OCI-LY7 (cell line): ENCODE measurements at regions of chr17 and their contacts with region 1.

Region 1: DNA sequence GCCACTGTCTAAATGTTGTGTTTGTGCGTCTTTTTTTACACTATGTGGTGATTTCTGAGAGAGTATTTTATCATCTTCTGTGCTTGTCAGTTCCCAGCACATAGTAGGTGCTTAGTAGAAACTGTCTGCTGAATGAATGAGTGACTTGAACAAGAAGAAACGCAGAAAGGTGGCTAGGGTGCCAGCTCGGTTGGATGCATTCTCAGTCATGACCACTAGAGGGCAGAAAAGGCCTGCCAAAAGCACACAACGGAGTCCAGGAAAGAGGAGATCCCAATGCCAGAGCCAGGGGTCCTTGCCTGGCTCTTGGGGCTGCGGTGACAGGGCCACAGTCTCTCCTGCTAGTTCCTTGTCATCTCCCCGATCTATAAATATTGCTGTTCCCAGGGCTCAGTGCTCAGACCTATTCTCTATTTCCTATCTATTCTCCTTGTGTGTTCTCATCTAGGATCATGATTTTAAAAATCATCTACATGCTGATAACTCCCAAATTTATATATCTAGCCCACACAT is 57.3 kb upstream of the CCL1 start:
- DNase-seq: peak; percentile 76
- H3K4me3 ChIP-seq: no peak overlapping the region
- H3K27ac ChIP-seq: no peak overlapping the region
- H3K4me1 ChIP-seq: no peaks in the 10 kb centered on the region
- CTCF ChIP-seq: peak; percentile 99

Region 2: DNA sequence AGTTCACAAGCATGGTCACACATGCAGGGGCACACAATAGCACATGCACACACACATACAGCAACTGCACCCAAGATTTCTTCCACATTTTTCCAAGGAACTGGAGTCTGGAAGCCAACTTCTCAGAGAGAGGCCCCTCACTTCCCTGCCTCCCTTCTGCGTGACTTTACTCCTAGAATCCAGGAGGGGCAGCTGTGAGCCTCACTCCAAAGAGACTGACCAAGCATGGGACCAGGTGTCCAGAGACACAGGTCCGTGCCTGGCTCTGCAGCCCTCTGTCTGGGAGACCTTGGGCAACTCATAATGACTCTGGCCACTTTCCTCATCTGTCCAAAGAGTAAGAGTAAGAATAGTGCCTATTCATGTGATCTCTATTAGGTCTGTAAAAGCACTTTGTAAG is 54.4 kb after region 1 on chr17:
- CTCF ChIA-PET with region 1: no interaction called
- POLR2A ChIA-PET with region 1: no interaction called
- intact Hi-C with region 1: loop called (anchors 10 kb)
- DNase-seq: no peak
- H3K4me3 ChIP-seq: no peak overlapping the region
- H3K27ac ChIP-seq: no peak overlapping the region
- H3K4me1 ChIP-seq: no peaks in the 10 kb centered on the region
- CTCF ChIP-seq: no peak

Region 3: DNA sequence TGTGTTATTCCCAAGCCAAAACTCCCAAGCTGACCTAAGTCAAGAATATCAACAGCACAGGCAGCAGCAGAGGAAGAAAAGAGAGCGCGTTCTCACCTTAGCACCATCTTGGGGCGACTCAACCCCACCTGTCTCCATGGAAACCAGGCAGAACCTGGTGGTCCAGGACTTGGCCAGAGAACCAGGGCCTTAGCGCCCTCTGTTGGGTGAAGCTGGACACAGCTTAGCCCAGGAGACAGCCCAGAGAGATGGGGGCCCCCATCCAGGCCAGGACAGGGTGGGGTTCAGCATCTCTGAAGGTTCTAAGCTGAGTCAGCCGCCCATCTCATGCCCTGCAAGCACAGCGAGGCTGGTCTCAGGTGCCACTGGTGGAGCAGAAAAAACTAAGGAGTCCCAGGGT is 99.0 kb after region 1 on chr17:
- CTCF ChIA-PET with region 1: no interaction called
- POLR2A ChIA-PET with region 1: no interaction called
- intact Hi-C with region 1: loop called (anchors 2 kb)
- DNase-seq: peak; percentile 43
- H3K4me3 ChIP-seq: no peak overlapping the region
- H3K27ac ChIP-seq: no peak overlapping the region
- H3K4me1 ChIP-seq: no peaks in the 10 kb centered on the region
- CTCF ChIP-seq: peak; percentile 83

Region 4: GRCh38 chr17:34637548-34638525 is 217.5 kb after region 1 on chr17:
- CTCF ChIA-PET with region 1: no interaction called
- POLR2A ChIA-PET with region 1: no interaction called
- intact Hi-C with region 1: loop called (anchors 1 kb)
- DNase-seq: peak; percentile 63
- H3K4me3 ChIP-seq: no peak overlapping the region
- H3K27ac ChIP-seq: no peak overlapping the region
- H3K4me1 ChIP-seq: no peaks in the 10 kb centered on the region
- CTCF ChIP-seq: peak; percentile 80

Region 5: DNA sequence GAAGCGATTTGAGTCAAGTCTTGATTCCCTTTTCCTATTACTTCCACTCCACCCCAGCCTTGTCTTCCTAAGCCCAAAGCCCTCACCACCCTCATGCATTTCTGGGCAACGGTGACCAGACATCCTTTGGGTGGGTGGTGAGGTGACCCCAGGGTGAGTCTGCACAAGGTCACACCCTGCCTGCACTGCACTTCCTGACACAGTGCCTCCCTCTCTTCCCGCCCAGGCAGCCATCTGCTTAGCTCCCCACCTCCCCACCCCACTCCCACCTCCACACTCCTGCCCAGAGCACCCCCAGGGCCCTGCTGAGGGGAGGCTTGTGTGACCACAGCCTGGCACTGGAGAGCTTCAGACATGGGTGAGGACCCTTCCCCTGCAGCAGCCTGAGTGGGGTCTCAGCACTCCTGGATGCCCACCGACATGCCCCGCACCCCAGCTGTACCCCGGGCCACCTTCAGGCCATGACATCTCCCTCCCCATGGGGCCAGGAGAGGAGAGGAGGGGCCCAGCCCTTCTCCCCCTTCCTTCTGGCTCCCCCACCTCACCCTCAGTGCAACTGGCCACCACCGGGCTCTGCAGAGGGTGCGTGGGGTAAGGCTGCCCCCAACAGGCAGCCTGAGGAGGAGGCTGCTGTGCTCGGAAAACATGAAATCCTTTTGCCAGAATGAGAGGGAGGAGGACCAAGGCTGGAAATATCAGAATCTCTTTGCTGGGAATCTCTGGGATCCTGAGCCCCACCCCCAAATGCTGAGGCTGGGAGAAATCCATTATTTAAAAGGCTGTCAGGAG is 472.3 kb after region 1 on chr17:
- CTCF ChIA-PET with region 1: no interaction called
- POLR2A ChIA-PET with region 1: no interaction called
- intact Hi-C with region 1: loop called (anchors 10 kb)
- DNase-seq: peak; percentile 47
- H3K4me3 ChIP-seq: no peak overlapping the region
- H3K27ac ChIP-seq: no peak overlapping the region
- H3K4me1 ChIP-seq: no peaks in the 10 kb centered on the region
- CTCF ChIP-seq: peak; percentile 89